Activated CD4-positive, alpha-beta T cell treated with anti-CD3 and anti-CD28 coated beads, Interleukin-2, amount 10 ng/mL, durations not matched to agents 24 days and 14 days (primary cell): ENCODE measurements at regions of chr4 and their contacts with region 1.

Region 1: DNA sequence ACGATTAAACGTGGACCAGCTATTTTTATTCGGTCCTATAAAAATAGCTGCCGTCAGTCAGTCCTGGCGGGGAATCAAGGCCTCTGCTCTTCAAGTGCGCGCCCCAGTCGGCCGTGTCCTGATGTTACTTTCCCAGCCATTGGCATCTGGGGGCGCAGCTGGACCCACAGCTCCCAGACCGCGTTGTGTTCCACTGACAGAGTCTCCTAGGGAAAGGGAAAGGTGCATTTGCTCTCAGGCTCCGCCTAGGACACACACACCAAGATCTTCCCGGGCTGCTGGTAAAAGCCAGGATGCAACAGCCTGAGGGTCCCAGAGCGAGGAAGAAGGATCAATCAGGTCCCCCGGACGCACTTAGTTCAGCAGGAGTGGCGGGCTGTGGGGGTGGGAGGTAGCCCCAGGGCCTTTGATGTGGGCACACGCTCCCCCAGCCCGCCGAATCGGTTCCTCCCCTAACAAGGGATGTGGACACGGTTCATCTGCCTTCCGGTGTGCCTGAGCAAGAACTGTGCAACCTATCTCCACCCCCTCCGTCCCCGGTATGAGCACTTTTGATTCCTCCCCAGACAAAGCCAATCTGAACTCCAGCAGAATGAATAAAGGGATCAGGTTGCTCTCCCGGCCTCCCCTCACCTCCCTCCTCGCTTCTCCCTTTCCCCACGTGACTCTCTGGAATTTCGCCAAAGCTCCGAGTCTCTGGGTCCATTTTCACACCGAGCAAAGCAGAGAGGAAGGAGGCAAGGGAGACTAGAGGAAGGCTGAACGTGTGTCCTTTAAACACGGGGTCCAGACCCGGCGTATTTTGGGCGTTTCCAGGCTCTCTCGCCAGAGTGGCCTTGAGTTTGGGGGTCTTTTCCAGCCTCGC is 626 bp upstream of the FRAS1 start:
- DNase-seq: peak; percentile 74
- H3K4me3 Mint-ChIP-seq: peak overlapping the region; percentile 88
- H3K27ac Mint-ChIP-seq: no peak overlapping the region
- H3K4me1 Mint-ChIP-seq: peaks cover 26% of the 10 kb centered on the region
- H3K27me3 Mint-ChIP-seq: peaks cover 71% of the 10 kb centered on the region

Region 2: GRCh38 chr4:77959566-77960338 is 96.7 kb before region 1 on chr4:
- intact Hi-C with region 1: loop called (anchors 5 kb)
- DNase-seq: peak; percentile 61
- H3K4me3 Mint-ChIP-seq: no peak overlapping the region
- H3K27ac Mint-ChIP-seq: no peak overlapping the region
- H3K4me1 Mint-ChIP-seq: peaks cover 6% of the 10 kb centered on the region
- H3K27me3 Mint-ChIP-seq: no peaks in the 10 kb centered on the region